Ascending aorta (tissue), 2 donors: ENCODE measurements at regions of chr9 and their contacts with region 1.

Region 1: GRCh38 chr9:115694014-115694413 is 459.6 kb upstream of the PAPPA start:
- DNase-seq: no peak
- H3K4me3 ChIP-seq: no peak overlapping the region
- H3K27ac ChIP-seq: no peak overlapping the region
- H3K4me1 ChIP-seq: peaks cover 0 to 6% of the 10 kb centered on the region in 2 donors
- H3K27me3 ChIP-seq: no peaks in the 10 kb centered on the region
- CTCF ChIP-seq: peak; percentile 36 to 52 (median 36)

Region 2: DNA sequence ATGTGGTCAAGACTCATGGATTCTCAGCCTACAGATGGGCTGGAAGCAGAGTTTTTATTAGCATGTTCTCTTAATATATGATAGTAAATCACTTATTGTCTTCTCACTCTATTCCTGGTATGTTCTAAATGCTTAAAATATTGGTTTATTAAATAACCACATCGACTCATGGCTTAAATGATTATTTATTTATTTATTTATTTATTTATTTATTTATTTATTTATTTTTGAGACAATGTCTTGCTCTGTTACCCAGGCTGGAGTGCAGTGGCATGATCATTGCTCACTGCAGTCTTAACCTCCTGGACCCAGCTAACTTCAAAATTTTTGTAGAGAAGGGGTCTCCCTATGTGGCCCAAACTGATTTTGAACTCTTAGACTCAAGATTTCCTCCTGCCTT is 118.9 kb before region 1 on chr9:
- intact Hi-C with region 1: no loop called
- DNase-seq: no peak
- H3K4me3 ChIP-seq: no peak overlapping the region
- H3K27ac ChIP-seq: no peak overlapping the region
- H3K4me1 ChIP-seq: no peaks in the 10 kb centered on the region
- H3K27me3 ChIP-seq: no peaks in the 10 kb centered on the region
- CTCF ChIP-seq: no peak

Region 3: DNA sequence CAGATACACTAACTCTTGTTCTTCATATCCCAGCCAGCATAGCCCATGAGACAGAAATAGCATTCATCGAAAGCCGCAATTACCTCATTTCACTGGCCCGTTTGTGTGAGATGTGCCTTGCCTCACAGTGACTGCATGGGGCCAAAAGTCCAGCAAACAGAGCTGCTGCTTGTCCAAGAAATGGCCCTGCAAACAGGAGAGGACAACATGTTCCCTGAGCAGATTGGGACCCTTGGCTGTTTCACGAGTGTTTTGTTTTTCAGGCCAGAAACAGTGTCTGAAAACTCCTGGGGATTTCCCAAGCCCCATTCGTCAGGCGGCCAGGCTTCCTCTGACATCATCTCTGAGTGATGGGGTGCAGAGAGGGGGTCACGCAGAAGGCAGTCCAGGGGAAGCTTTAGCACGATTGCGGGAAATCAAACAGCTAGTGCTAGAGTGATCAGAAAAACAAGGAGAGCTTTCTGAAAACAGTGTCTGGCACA is 44.0 kb before region 1 on chr9:
- intact Hi-C with region 1: loop called (anchors 1 kb)
- DNase-seq: peak; percentile 86 to 97
- H3K4me3 ChIP-seq: no peak overlapping the region
- H3K27ac ChIP-seq: peak overlapping the region; percentile 93 to 94
- H3K4me1 ChIP-seq: peaks cover 0 to 22% of the 10 kb centered on the region in 2 donors
- H3K27me3 ChIP-seq: no peaks in the 10 kb centered on the region
- CTCF ChIP-seq: no peak

Region 4: DNA sequence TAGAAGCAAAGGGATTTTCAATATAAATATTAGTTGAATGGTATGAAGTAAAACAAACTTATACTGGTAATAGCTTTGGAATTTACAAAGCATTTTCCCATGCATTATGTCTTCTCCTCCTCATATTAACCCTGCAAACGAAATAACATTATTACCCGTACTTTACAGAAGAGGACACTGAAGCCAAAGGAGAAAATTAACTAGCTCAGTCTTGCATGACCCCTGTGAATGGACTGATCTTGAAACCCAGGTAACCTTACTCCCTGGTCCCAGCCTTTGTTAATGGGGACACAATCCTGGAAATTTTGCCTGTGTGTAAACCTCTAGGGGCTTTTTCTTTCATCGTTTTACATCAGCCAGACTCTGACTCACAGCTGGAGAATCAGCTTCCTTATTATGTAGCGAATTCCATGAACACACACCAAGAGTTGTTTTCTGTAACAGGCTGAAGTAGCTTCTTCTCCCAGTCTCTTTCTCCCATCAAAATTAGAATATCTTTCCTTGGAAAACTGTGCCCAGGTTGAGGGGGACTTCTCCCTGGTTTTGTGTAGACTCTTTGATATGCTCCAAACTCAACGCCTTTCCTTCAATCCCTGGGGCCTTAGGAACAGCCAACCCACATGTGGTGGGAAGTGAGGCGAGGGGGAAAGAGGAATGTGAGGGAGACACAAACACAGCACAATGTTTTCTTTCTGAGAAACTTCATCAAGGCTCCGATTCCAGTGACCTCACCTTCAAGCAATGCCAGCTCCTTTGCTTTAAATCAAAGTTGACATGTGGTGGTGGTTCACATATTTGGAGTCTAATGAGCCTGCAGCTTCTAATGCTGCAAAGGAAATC is 21.3 kb before region 1 on chr9:
- intact Hi-C with region 1: loop called (anchors 2 kb)
- DNase-seq: peak in 1 of 2 donors; percentile 77
- H3K4me3 ChIP-seq: no peak overlapping the region
- H3K27ac ChIP-seq: peak overlapping the region; percentile 81 to 86
- H3K4me1 ChIP-seq: peaks cover 9 to 36% of the 10 kb centered on the region in 2 donors
- H3K27me3 ChIP-seq: no peaks in the 10 kb centered on the region
- CTCF ChIP-seq: no peak

Region 5: GRCh38 chr9:115746496-115746895 is 52.5 kb after region 1 on chr9:
- intact Hi-C with region 1: no loop called
- DNase-seq: no peak
- H3K4me3 ChIP-seq: no peak overlapping the region
- H3K27ac ChIP-seq: no peak overlapping the region
- H3K4me1 ChIP-seq: no peaks in the 10 kb centered on the region
- H3K27me3 ChIP-seq: no peaks in the 10 kb centered on the region
- CTCF ChIP-seq: no peak

Region 6: GRCh38 chr9:115757461-115757860 is 63.4 kb after region 1 on chr9:
- intact Hi-C with region 1: loop called (anchors 5 kb)
- DNase-seq: no peak
- H3K4me3 ChIP-seq: no peak overlapping the region
- H3K27ac ChIP-seq: no peak overlapping the region
- H3K4me1 ChIP-seq: peaks cover 4 to 25% of the 10 kb centered on the region in 2 donors
- H3K27me3 ChIP-seq: no peaks in the 10 kb centered on the region
- CTCF ChIP-seq: no peak

Region 7: DNA sequence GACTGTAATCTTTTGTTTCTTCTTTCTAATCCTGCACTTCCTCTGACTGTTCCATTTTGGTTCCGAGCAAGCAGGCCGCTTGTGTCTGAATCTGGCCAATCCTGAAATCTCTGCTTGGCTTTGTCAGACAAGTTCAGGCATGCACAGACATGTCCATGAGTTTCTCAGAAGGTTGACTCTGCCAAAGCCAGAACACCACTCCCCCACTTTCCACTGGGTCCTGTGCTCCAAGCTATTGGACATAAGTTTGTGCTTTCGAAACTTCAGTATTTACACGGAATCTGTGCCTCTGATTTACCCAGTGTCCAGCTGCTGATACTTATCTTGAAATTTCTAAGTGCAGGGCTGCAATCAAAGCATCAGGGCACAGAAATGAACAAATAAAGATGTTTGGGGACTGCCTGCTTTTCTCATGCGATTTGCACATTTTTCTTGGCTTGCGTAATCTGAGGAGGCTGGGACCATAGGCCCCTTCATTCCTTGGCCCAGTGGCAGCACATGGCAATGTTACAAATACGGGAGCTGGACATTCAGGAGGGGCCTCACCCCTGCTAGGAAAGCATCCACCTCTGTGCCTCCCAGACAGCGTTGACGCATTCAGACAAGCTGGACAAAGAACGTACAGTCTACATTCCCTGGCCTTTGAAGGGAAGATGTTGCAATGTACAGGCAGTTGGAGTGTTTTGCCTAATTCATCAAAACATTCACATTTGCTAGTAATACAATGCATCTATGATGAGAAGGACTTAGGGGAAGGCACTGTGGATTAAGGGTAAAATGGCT is 250.3 kb after region 1 on chr9:
- intact Hi-C with region 1: loop called (anchors 2 kb)
- DNase-seq: peak in 1 of 2 donors; percentile 95
- H3K4me3 ChIP-seq: peak overlapping the region in 1 of 2 donors; percentile 10
- H3K27ac ChIP-seq: peak overlapping the region; percentile 83 to 90
- H3K4me1 ChIP-seq: peaks cover 0 to 18% of the 10 kb centered on the region in 2 donors
- H3K27me3 ChIP-seq: no peaks in the 10 kb centered on the region
- CTCF ChIP-seq: no peak

Region 8: DNA sequence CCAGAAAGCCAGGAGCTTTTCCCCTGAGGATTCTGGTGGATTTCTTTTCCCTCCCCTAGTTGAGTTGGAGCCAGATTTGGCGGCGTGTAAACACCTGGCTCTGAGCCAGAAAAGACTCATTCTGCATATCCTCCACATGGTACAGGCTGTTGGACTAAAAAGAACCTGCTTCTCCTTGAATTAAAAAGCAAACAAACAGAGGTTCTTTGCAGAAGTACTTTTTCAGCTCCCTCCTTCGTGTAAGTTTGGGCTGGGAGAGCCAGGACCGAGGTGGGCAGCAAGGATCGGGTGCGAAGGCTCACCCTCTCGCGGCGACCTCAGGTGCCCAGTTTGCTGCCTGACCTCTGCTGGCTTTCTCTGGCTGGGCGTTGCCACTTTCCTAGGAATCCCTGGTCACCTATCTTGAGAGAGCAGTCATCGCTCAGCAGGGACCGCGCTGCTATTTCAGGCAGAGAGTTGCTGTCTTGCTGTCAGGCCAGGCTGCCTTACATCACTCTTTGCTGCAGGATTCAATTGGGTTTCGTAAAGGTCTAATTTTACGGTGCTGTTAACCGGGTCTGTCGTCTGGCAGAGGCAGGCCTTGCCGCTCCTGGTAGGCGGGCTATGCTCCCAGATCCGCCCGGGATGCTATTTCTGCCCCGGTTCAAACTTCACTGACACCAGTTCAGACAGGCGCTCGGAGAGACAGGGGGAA is 462.8 kb after region 1 on chr9:
- intact Hi-C with region 1: loop called (anchors 5 kb)
- DNase-seq: peak; percentile 62 to 90
- H3K4me3 ChIP-seq: peak overlapping the region in 1 of 2 donors; percentile 86
- H3K27ac ChIP-seq: peak overlapping the region; percentile 86 to 89
- H3K4me1 ChIP-seq: peaks cover 0 to 9% of the 10 kb centered on the region in 2 donors
- H3K27me3 ChIP-seq: no peaks in the 10 kb centered on the region
- CTCF ChIP-seq: no peak

Region 9: GRCh38 chr9:116572095-116572748 is 878.2 kb after region 1 on chr9:
- intact Hi-C with region 1: loop called (anchors 5 kb)
- DNase-seq: peak in 1 of 2 donors; percentile 87
- H3K4me3 ChIP-seq: no peak overlapping the region
- H3K27ac ChIP-seq: no peak overlapping the region
- H3K4me1 ChIP-seq: no peaks in the 10 kb centered on the region
- H3K27me3 ChIP-seq: no peaks in the 10 kb centered on the region
- CTCF ChIP-seq: peak; percentile 72 to 93 (median 73)